ENCODE measurements at regions of chr20 and their contacts with region 1.

Region 1: DNA sequence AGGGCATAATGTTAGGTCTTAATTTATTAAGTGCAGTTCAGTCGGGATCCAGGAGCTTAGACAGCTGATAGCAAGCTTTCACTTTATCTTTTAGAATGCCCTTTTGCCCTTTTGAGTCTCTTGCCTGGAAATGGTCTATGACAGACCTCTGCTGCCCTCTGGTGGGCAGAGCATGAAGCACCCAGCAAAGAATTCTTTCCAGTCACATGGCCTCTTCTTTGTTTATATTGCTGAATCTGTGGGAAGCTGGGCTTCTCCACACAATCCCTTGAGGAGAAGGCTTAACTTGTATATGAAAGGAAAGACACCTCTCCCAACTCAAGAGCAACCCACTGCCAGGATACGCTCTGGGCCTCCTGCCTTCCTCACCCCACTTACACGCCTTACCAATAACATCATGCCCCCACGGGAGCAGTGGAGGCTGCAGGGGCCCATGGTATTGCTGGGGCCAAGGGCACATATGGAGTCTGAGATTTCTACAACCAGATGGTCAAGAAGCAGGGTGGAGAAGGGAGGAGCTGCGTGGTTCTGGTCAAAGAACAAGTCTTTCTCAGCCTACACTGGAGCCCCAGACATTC is 20.4 kb downstream of the WFDC3 start:
- DNase-seq: peak; percentile 59 to 84 (median 74)
- ATAC-seq: peak; percentile 95
- H3K4me3 ChIP-seq: no peak overlapping the region
- H3K4me3 Mint-ChIP-seq: no peak overlapping the region
- H3K27ac ChIP-seq: no peak overlapping the region
- H3K27ac Mint-ChIP-seq: peak overlapping the region in 3 of 9 donors; percentile 4 to 40 (median 5)
- H3K4me1 ChIP-seq: no peaks in the 10 kb centered on the region
- H3K4me1 Mint-ChIP-seq: peaks cover 0 to 5% (median 4%) of the 10 kb centered on the region in 7 donors
- H3K27me3 ChIP-seq: no peaks in the 10 kb centered on the region
- H3K27me3 Mint-ChIP-seq: peaks cover 0 to 14% (median 8%) of the 10 kb centered on the region in 5 donors

Region 2: GRCh38 chr20:45311589-45312211 is 459.6 kb before region 1 on chr20:
- CTCF ChIA-PET with region 1: interaction called, 67 read pairs
- POLR2A ChIA-PET with region 1: no interaction called
- intact Hi-C with region 1: loop called (anchors 1 to 2 kb)
- DNase-seq: peak in 8 of 9 donors; percentile 37 to 73 (median 42)
- ATAC-seq: peak; percentile 76
- H3K4me3 ChIP-seq: no peak overlapping the region
- H3K4me3 Mint-ChIP-seq: peak overlapping the region in 1 of 10 donors; percentile 10
- H3K27ac ChIP-seq: no peak overlapping the region
- H3K27ac Mint-ChIP-seq: no peak overlapping the region
- H3K4me1 ChIP-seq: no peaks in the 10 kb centered on the region
- H3K4me1 Mint-ChIP-seq: peaks cover 7 to 24% (median 10%) of the 10 kb centered on the region in 7 donors
- H3K27me3 ChIP-seq: no peaks in the 10 kb centered on the region
- H3K27me3 Mint-ChIP-seq: peaks cover 25 to 67% (median 62%) of the 10 kb centered on the region in 5 donors

Region 3: GRCh38 chr20:45373353-45374100 is 397.7 kb before region 1 on chr20:
- CTCF ChIA-PET with region 1: interaction called, 10 read pairs
- POLR2A ChIA-PET with region 1: interaction called, 5 read pairs
- intact Hi-C with region 1: no loop called
- DNase-seq: peak; percentile 81 to 90 (median 89)
- ATAC-seq: peak; percentile 94
- H3K4me3 ChIP-seq: peak overlapping the region; percentile 74
- H3K4me3 Mint-ChIP-seq: peak overlapping the region; percentile 84 to 94 (median 90)
- H3K27ac ChIP-seq: peak overlapping the region; percentile 77
- H3K27ac Mint-ChIP-seq: peak overlapping the region; percentile 87 to 97 (median 96)
- H3K4me1 ChIP-seq: peaks cover 13 to 29% of the 10 kb centered on the region in 2 donors
- H3K4me1 Mint-ChIP-seq: peaks cover 18 to 48% (median 46%) of the 10 kb centered on the region in 7 donors
- H3K27me3 ChIP-seq: no peaks in the 10 kb centered on the region
- H3K27me3 Mint-ChIP-seq: no peaks in the 10 kb centered on the region

Region 4: DNA sequence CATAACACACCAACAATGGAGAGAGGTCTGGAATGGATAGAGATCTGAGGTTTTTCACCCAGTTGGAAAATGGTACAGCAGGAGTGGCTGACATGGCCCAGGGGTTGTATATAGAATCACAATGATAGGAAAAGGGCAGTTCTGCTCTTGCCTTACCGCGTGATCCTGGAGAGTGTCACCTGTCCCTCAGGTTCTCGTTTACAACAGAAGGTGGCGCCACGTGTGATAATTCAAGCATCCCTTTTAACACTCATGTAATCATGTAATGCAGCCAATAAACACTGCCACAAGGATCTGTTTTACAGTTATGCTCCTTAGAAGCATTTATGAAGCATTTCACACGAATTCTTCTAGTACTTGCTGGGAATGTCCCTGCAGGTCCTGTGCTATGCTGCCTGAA is 314.6 kb before region 1 on chr20:
- CTCF ChIA-PET with region 1: interaction called, 3 read pairs
- POLR2A ChIA-PET with region 1: no interaction called
- intact Hi-C with region 1: loop called (anchors 1 kb)
- DNase-seq: peak in 2 of 9 donors; percentile 7 to 14
- ATAC-seq: peak; percentile 48
- H3K4me3 ChIP-seq: no peak overlapping the region
- H3K4me3 Mint-ChIP-seq: no peak overlapping the region
- H3K27ac ChIP-seq: no peak overlapping the region
- H3K27ac Mint-ChIP-seq: no peak overlapping the region
- H3K4me1 ChIP-seq: no peaks in the 10 kb centered on the region
- H3K4me1 Mint-ChIP-seq: peaks cover 0 to 5% (median 0%) of the 10 kb centered on the region in 7 donors
- H3K27me3 ChIP-seq: no peaks in the 10 kb centered on the region
- H3K27me3 Mint-ChIP-seq: peaks cover 0 to 14% (median 0%) of the 10 kb centered on the region in 5 donors

Region 5: DNA sequence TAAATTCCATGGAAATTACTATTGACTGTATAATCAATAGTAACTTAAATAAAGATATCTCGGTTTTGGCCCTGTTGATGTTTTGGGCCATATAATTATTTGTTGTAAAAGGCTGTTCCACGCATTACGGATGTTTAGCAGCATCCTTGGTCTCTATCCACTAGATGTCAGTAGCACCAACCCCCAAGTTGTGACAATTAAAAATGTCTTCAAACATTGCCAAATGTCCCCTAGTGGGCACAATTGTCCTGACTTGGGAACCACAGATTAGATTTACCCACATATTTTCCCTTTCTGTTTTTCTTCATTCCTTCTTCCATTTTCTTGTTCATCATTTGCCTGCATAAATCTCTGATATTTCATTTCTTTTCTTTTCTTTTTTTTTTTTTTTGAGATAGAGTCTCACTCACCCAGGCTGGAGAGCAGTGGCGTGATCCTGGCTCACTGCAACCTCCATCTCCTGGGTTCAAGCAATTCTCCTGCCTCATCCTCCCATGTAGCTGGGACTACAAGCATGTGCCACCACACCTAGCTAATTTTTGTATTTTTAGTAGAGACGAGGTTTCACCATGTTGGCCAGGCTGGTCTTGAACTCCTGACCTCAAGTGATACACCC is 178.6 kb before region 1 on chr20:
- CTCF ChIA-PET with region 1: interaction called, 3 read pairs
- POLR2A ChIA-PET with region 1: no interaction called
- intact Hi-C with region 1: loop called in 1 of 2 experiments (anchors 1 kb)
- DNase-seq: peak in 4 of 9 donors; percentile 1 to 20 (median 11)
- ATAC-seq: peak; percentile 65
- H3K4me3 ChIP-seq: no peak overlapping the region
- H3K4me3 Mint-ChIP-seq: no peak overlapping the region
- H3K27ac ChIP-seq: no peak overlapping the region
- H3K27ac Mint-ChIP-seq: no peak overlapping the region
- H3K4me1 ChIP-seq: no peaks in the 10 kb centered on the region
- H3K4me1 Mint-ChIP-seq: no peaks in the 10 kb centered on the region
- H3K27me3 ChIP-seq: peaks cover 0 to 2% of the 10 kb centered on the region in 2 donors
- H3K27me3 Mint-ChIP-seq: peaks cover 25 to 50% (median 41%) of the 10 kb centered on the region in 5 donors